ENCODE measurements at regions of chr2 and their contacts with region 1.

Region 1: GRCh38 chr2:96509114-96509846 is 4.1 kb upstream of the NEURL3 start:
- DNase-seq: peak; percentile 89 to 91 (median 90)
- ATAC-seq: peak; percentile 85 to 90 (median 87)
- H3K4me3 ChIP-seq: no peak overlapping the region
- H3K27ac ChIP-seq: no peak overlapping the region
- H3K4me1 ChIP-seq: peaks cover 0 to 33% (median 17%) of the 10 kb centered on the region in 4 donors
- H3K27me3 ChIP-seq: no peaks in the 10 kb centered on the region
- CTCF ChIP-seq: peak; percentile 97 to 99 (median 98)
- POLR2A ChIP-seq: no peak

Region 2: DNA sequence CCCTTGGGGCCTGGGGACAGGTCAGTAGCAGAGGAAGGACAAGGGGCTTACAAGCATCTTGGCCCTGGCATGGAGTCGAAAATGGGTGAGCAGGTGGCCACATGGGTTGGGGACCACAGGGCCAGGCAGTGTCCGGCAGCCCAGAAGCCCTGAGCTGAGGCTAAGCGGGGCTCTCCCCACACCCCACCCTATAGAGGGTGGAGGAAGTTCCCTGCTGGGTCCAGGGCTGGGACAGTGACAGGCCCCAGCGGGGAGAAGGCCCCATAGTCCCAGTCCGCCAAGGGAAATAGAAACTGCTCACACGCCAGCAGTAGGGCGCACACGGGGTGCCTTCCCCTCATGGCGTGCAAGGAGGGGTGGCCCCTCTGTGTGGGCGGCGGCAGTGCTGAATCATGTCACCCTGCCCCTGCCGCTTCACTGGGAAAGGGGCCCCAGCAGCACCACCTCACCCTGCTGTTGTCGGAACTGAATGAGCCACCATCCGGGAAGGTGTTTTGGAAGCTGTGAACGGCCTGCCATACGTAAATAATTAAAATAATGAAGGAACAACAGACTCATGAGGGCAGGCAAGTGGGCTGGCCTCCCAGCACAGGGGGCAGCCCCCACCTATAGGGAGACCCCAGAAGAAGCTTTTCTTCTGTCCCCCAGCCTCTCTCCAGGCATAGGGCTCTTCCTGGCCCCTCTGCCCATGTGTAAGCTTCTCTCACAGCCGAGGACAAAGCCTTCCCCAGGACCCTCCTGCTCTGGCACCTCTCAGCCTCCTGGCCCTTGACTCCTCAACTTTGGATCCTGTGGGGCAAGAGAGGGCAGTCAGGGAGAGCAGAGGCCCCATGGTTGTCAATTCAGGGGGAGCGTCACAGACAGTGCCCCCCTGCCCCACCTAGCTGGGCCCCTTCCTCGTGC is 351.4 kb before region 1 on chr2:
- intact Hi-C with region 1: loop called in 1 of 2 experiments (anchors 10 kb)
- DNase-seq: peak in 2 of 3 donors; percentile 13 to 52
- ATAC-seq: peak; percentile 37 to 64 (median 53)
- H3K4me3 ChIP-seq: no peak overlapping the region
- H3K27ac ChIP-seq: no peak overlapping the region
- H3K4me1 ChIP-seq: no peaks in the 10 kb centered on the region
- H3K27me3 ChIP-seq: no peaks in the 10 kb centered on the region
- CTCF ChIP-seq: no peak
- POLR2A ChIP-seq: no peak

Region 3: GRCh38 chr2:96407041-96407918 is 102.0 kb before region 1 on chr2:
- intact Hi-C with region 1: loop called (anchors 5 kb)
- DNase-seq: peak; percentile 46 to 67 (median 67)
- ATAC-seq: peak; percentile 80 to 95 (median 86)
- H3K4me3 ChIP-seq: no peak overlapping the region
- H3K27ac ChIP-seq: no peak overlapping the region
- H3K4me1 ChIP-seq: no peaks in the 10 kb centered on the region
- H3K27me3 ChIP-seq: no peaks in the 10 kb centered on the region
- CTCF ChIP-seq: peak; percentile 72 to 87 (median 76)
- POLR2A ChIP-seq: no peak

Region 4: GRCh38 chr2:96470636-96471035 is 38.6 kb before region 1 on chr2:
- intact Hi-C with region 1: loop called in 1 of 2 experiments (anchors 5 kb)
- DNase-seq: peak; percentile 74 to 77 (median 76)
- ATAC-seq: peak; percentile 96 to 99 (median 98)
- H3K4me3 ChIP-seq: peak overlapping the region; percentile 21 to 39 (median 26)
- H3K27ac ChIP-seq: no peak overlapping the region
- H3K4me1 ChIP-seq: peaks cover 0 to 8% (median 0%) of the 10 kb centered on the region in 4 donors
- H3K27me3 ChIP-seq: no peaks in the 10 kb centered on the region
- CTCF ChIP-seq: peak; percentile 62 to 82 (median 75)
- POLR2A ChIP-seq: no peak

Region 5: GRCh38 chr2:96656540-96656939 is 147.3 kb after region 1 on chr2:
- intact Hi-C with region 1: no loop called
- DNase-seq: no peak
- ATAC-seq: no peak
- H3K4me3 ChIP-seq: no peak overlapping the region
- H3K27ac ChIP-seq: no peak overlapping the region
- H3K4me1 ChIP-seq: no peaks in the 10 kb centered on the region
- H3K27me3 ChIP-seq: no peaks in the 10 kb centered on the region
- CTCF ChIP-seq: no peak
- POLR2A ChIP-seq: no peak